ENCODE measurements at regions of chr4 and their contacts with region 1.

Region 1: GRCh38 chr4:24686871-24687680 is 102.7 kb upstream of the DHX15 start:
- DNase-seq: no peak
- ATAC-seq: peak; percentile 82

Region 2: DNA sequence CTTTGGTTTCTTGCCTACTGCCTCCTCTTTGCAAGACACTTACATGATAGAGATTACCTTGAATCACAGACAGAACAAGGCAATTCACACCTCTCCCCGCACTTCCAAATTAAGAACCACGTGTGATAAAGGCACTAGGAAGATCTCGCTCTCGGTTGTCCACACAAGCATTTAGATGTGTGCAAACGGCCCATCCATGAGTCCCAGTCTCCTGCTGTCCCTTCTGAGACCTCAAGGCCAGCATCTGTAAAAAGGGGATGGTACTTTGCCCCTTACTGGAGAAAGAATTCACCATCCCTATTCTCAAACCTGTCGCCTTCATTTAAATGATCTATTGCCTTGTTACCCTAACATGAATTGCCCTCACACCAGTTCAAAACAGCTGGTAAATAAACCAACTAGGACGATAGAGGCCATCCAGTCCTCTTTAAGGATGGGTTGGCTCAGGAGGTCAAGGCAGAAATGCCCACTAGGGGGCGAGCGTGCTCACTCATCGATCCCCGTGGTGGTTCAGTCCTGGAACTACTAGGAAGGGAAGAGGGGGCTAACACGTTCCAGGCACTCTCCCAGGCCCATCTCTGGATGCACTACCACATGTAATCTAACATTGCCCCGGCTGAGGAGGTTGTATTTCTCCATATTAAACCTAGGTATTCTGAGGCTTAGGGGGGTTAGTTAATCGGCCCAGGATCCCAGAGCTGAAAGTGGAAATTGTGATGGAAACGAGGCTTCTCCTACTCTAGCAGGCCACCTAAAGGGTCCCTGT is 198.5 kb before region 1 on chr4:
- intact Hi-C with region 1: loop called (anchors 10 kb)
- DNase-seq: peak; percentile 90
- ATAC-seq: peak; percentile 85

Measured in sciatic nerve (tissue), 2 donors.